HCT116 (cell line): ENCODE measurements at regions of chr2 and their contacts with region 1.

Region 1: GRCh38 chr2:204353823-204354222 is 191.5 kb upstream of the PARD3B start:
- DNase-seq: no peak
- ATAC-seq: no peak
- H3K4me3 ChIP-seq: no peak overlapping the region
- H3K27ac ChIP-seq: no peak overlapping the region
- H3K4me1 ChIP-seq: no peaks in the 10 kb centered on the region
- H3K27me3 ChIP-seq: no peaks in the 10 kb centered on the region
- CTCF ChIP-seq: no peak
- POLR2A ChIP-seq: no peak
- RAD21 ChIP-seq: no peak

Region 2: GRCh38 chr2:204625167-204625566 is 271.3 kb after region 1 on chr2:
- CTCF ChIA-PET with region 1: no interaction called
- POLR2A ChIA-PET with region 1: no interaction called
- RAD21 ChIA-PET with region 1: no interaction called
- intact Hi-C with region 1: loop called (anchors 10 kb)
- DNase-seq: no peak
- ATAC-seq: no peak; the same call in 1 of the 2 replicates
- H3K4me3 ChIP-seq: no peak overlapping the region
- H3K27ac ChIP-seq: no peak overlapping the region
- H3K4me1 ChIP-seq: no peaks in the 10 kb centered on the region
- H3K27me3 ChIP-seq: no peaks in the 10 kb centered on the region
- CTCF ChIP-seq: no peak
- POLR2A ChIP-seq: no peak
- RAD21 ChIP-seq: peak; percentile 37; the same call in 1 of the 2 replicates